ENCODE measurements at regions of chr1 and their contacts with region 1.

Region 1: GRCh38 chr1:162276493-162276892 is 100.2 kb downstream of the SPATA46 start:
- DNase-seq: no peak

Region 2: GRCh38 chr1:162056043-162056442 is 220.4 kb before region 1 on chr1:
- intact Hi-C with region 1: loop called (anchors 1 kb)
- DNase-seq: no peak

Region 3: DNA sequence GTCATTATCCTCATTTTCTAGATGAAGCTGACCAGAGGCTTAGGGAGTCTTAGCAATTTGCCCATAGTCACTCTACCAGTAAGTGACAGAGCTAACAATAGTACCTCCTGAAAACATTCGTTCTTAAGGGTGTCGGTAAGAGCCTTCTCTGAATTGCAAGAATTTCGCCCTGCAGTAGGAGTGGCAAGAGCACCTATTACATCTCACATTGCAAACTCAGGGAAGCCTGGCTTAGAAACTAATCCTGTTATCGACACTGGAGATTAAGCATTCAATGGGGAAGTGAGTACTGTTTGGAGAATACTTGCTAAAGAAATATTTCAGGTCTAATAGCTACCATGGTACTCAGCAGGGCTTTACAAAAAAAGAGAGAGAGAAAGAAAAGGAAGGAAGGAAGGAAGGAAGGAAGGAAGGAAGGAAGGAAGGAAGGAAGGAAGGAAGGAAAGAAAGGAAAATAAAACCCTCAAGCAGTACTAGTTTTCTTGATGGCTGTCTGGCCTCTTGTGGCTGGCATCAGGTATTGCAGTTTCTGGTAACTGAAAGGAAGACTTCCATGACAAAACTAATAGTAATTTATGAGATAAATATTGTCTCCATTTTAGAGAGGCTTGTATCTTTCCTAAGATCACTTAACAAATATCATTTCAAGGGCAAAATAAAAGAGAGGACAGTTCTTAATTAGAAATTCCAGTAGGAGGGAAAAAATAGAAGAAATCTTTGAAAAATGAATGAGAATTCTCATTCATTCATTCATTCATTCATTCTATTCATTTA is 115.5 kb after region 1 on chr1:
- intact Hi-C with region 1: loop called (anchors 5 kb)
- DNase-seq: no peak